ENCODE measurements at regions of chr3 and their contacts with region 1.

Region 1: GRCh38 chr3:30578479-30578878 is 27.9 kb upstream of the TGFBR2 start:
- DNase-seq: peak; percentile 58
- ATAC-seq: peak; percentile 48

Region 2: DNA sequence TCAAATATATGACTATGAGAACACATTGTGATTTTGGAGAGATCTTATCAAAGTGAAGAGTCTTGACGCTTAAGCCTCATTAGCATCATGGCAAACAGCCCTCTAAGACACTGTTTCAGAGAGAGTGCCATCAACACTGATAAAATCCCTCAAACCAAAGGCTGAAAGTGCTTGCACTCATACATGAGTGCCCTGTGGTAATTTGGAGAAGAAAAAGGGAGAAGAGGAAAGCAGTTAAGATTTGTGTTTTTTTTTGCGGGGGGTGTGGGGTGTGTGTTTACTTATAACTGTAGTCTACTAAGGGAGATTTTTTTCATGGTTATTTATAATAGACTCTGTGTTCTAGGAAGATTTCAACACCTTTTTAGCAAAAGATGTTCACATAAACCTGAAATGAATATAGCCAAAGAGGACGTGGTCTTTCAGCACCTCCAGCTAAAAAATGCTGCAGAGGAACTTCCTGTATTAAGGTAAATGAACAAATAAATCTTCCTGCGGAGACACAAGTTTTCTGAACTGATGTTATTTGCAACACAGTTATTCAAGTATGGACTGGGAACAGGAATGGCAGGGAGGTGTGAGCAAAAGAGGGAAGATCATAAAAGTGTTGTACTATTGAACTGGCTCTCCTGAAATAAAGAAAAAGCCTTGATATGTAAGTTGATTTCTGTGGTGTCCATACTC is 54.0 kb before region 1 on chr3:
- intact Hi-C with region 1: loop called (anchors 5 kb)
- DNase-seq: no peak
- ATAC-seq: no peak

Measured in Right ventricle myocardium inferior (tissue), 1 donor.